Panc1 (cell line): ENCODE measurements at regions of chr21 and their contacts with region 1.

Region 1: GRCh38 chr21:33127154-33127893 is 57.4 kb downstream of the OLIG1 start:
- DNase-seq: peak; percentile 33
- ATAC-seq: peak; percentile 92
- H3K4me3 ChIP-seq: peak overlapping the region; percentile 15 to 31; a peak in 3 of 4 replicates
- H3K27ac ChIP-seq: no peak overlapping the region
- H3K4me1 ChIP-seq: no peaks in the 10 kb centered on the region; the same call in 1 of the 2 replicates
- H3K27me3 ChIP-seq: peaks cover 8% of the 10 kb centered on the region
- CTCF ChIP-seq: peak; percentile 83

Region 2: DNA sequence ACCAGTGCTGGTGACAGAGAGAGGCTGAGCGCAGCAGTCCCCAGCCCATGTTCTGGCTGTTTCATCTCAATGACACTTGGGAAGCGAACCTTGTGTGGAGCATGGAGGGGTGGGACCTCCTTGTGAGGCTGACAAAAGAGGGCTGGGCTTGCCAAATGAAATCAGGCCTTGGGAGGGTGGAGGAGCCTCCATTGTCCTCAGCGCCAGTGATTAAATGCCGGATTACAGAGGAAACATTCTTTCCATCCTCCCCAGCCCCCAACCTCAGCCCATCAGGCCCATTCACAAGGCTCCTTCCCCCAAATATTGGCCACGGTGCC is 292.4 kb before region 1 on chr21:
- CTCF ChIA-PET with region 1: interaction called, 6 read pairs
- POLR2A ChIA-PET with region 1: no interaction called
- in situ Hi-C with region 1: no loop called
- intact Hi-C with region 1: loop called (anchors 10 kb)
- DNase-seq: no peak
- ATAC-seq: no peak
- H3K4me3 ChIP-seq: no peak overlapping the region
- H3K27ac ChIP-seq: no peak overlapping the region
- H3K4me1 ChIP-seq: no peaks in the 10 kb centered on the region
- H3K27me3 ChIP-seq: no peaks in the 10 kb centered on the region; the same call in 1 of the 2 replicates
- CTCF ChIP-seq: no peak

Region 3: GRCh38 chr21:32940079-32941014 is 187.0 kb before region 1 on chr21:
- CTCF ChIA-PET with region 1: interaction called, 3 read pairs
- POLR2A ChIA-PET with region 1: no interaction called
- in situ Hi-C with region 1: no loop called
- intact Hi-C with region 1: loop called (anchors 10 kb)
- DNase-seq: peak; percentile 22
- ATAC-seq: no peak
- H3K4me3 ChIP-seq: no peak overlapping the region
- H3K27ac ChIP-seq: no peak overlapping the region
- H3K4me1 ChIP-seq: no peaks in the 10 kb centered on the region
- H3K27me3 ChIP-seq: no peaks in the 10 kb centered on the region; the same call in 1 of the 2 replicates
- CTCF ChIP-seq: peak; percentile 84

Region 4: DNA sequence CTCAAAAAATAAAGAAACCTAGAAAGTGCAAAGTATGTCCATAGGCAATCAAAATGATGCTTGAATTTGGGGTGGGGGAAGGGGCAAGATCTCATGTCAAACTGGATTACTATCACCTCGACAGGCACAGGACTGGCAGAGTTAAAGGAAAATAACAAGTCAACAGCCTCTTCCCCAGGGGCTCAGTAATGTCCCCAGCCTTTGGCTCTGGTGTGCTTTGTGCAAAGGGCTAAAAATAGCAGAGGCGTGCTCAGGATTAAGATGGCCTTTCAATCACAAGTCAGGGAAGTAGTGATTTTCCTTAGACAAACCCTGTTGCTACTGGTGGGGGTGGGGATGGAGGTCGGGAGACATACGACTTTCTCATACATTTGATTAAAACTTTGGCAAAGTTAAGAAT is 165.1 kb before region 1 on chr21:
- CTCF ChIA-PET with region 1: no interaction called
- POLR2A ChIA-PET with region 1: no interaction called
- in situ Hi-C with region 1: no loop called
- intact Hi-C with region 1: no loop called
- DNase-seq: no peak
- ATAC-seq: no peak
- H3K4me3 ChIP-seq: no peak overlapping the region
- H3K27ac ChIP-seq: no peak overlapping the region
- H3K4me1 ChIP-seq: no peaks in the 10 kb centered on the region
- H3K27me3 ChIP-seq: 0 out of 2 replicates have a peak, but pooled peaks cover 4% of the 10 kb centered on the region
- CTCF ChIP-seq: no peak

Region 5: DNA sequence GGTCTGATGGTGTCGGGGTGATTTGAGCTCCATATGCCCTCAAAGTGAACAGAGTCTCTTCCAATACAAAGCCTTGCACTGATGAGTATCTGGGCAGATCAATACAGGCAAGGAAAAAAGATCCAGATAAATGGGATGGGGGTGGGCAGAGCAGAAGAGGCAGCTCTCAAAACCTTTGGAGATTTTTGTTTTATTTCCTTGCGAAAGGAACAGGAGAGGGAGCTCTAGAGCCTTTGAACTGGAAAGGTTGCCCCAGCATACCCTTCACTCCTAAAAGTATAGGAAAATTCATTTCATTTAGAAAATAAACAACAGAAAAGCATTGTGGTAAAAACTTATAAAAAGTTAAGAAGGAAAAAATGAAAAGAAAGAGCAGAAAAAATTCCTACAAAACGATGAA is 133.0 kb before region 1 on chr21:
- CTCF ChIA-PET with region 1: interaction called, 5 read pairs
- POLR2A ChIA-PET with region 1: no interaction called
- in situ Hi-C with region 1: no loop called
- intact Hi-C with region 1: loop called (anchors 5 kb)
- DNase-seq: no peak
- ATAC-seq: no peak
- H3K4me3 ChIP-seq: no peak overlapping the region
- H3K27ac ChIP-seq: no peak overlapping the region
- H3K4me1 ChIP-seq: no peaks in the 10 kb centered on the region
- H3K27me3 ChIP-seq: no peaks in the 10 kb centered on the region; the same call in 1 of the 2 replicates
- CTCF ChIP-seq: peak; percentile 63